Activated CD4-positive, alpha-beta memory T cell treated with anti-CD3 and anti-CD28 coated beads, Interleukin-2, amount 10 ng/mL, durations not matched to agents 7 days and 5 days (primary cell): ENCODE measurements at regions of chr9 and their contacts with region 1.

Region 1: GRCh38 chr9:109440797-109441287 is 57.3 kb downstream of the PTPN3 start:
- DNase-seq: peak; percentile 68
- H3K4me3 Mint-ChIP-seq: no peak overlapping the region
- H3K27ac Mint-ChIP-seq: peak overlapping the region; percentile 51
- H3K4me1 Mint-ChIP-seq: peaks cover 22% of the 10 kb centered on the region
- H3K27me3 Mint-ChIP-seq: peaks cover 42% of the 10 kb centered on the region

Region 2: DNA sequence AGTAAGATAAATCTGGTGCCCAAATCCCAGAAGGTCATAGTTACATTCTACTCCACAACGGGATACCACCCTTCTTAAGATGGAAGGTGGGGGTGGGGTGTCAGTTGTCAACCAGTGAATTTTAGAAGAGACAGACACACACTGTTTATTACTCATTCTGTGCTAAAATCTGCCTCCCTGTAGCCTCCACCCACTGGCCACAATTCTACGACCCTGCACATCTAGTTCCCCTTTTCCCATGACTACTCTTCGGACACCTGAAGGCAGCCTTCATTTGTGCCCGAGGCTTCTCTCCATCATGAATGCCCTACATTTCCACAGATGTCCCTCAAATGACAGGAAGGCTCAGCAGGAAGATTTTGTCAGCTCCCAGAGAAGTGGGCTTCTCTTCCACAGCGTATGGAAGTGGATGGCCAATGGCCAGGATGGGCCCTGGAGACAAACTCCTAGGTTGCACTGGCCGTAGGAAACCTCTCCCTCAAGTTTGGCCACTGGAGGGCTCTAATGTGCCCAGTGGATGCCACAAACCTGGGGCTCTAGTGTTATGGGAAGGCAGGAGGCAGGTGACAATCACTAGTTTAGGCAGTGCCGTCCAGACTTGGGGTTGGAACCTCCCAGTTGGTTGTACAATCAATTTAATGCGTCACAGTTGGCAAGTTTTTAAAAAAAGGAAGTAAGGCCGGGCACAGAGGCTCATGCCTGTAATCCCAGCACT is 10.6 kb after region 1 on chr9:
- CTCF ChIA-PET with region 1: interaction called, 13 read pairs
- POLR2A ChIA-PET with region 1: no interaction called
- DNase-seq: no peak
- H3K4me3 Mint-ChIP-seq: no peak overlapping the region
- H3K27ac Mint-ChIP-seq: no peak overlapping the region
- H3K4me1 Mint-ChIP-seq: peaks cover 30% of the 10 kb centered on the region
- H3K27me3 Mint-ChIP-seq: peaks cover 27% of the 10 kb centered on the region